ENCODE measurements at regions of chr5 and their contacts with region 1.

Region 1: GRCh38 chr5:64811050-64811640 is 42.4 kb downstream of the CWC27 start:
- DNase-seq: peak; percentile 73
- H3K4me3 Mint-ChIP-seq: no peak overlapping the region
- H3K27ac Mint-ChIP-seq: no peak overlapping the region
- H3K4me1 Mint-ChIP-seq: peaks cover 1% of the 10 kb centered on the region
- H3K27me3 Mint-ChIP-seq: no peaks in the 10 kb centered on the region

Region 2: DNA sequence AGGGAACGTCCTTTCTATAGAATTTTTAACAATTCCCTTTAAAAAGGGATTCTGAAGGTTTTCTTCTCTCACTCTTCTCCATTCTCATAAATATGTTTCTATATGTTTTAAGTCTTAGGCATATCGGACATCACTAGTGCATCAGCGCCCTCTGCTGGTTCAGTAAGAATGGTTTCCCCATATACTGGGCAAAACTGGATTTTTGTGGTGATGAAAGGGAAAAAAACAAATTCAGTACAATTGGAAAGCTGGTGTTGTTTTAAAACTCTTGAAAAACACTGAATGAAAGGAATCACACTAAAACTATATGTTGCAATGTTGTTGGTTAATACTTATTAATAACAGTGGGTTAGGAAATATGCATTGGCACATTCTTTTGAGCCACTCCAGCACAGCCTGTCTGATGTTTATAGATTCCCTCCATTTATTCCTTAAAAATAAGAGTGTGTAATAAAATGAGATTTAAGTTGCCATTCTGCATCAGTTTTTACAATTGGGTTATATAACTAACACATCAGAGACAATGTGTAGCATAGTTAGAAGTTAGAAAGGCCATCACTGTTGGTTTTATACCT is 26.6 kb before region 1 on chr5:
- intact Hi-C with region 1: no loop called
- DNase-seq: peak; percentile 91
- H3K4me3 Mint-ChIP-seq: no peak overlapping the region
- H3K27ac Mint-ChIP-seq: no peak overlapping the region
- H3K4me1 Mint-ChIP-seq: peaks cover 2% of the 10 kb centered on the region
- H3K27me3 Mint-ChIP-seq: no peaks in the 10 kb centered on the region

Region 3: GRCh38 chr5:65102828-65103711 is 291.9 kb after region 1 on chr5:
- intact Hi-C with region 1: loop called (anchors 10 kb)
- DNase-seq: peak; percentile 80
- H3K4me3 Mint-ChIP-seq: peak overlapping the region; percentile 80
- H3K27ac Mint-ChIP-seq: peak overlapping the region; percentile 74
- H3K4me1 Mint-ChIP-seq: peaks cover 30% of the 10 kb centered on the region
- H3K27me3 Mint-ChIP-seq: peaks cover 13% of the 10 kb centered on the region

Region 4: GRCh38 chr5:65394087-65394486 is 582.9 kb after region 1 on chr5:
- intact Hi-C with region 1: loop called (anchors 10 kb)
- DNase-seq: no peak
- H3K4me3 Mint-ChIP-seq: no peak overlapping the region
- H3K27ac Mint-ChIP-seq: no peak overlapping the region
- H3K4me1 Mint-ChIP-seq: no peaks in the 10 kb centered on the region
- H3K27me3 Mint-ChIP-seq: no peaks in the 10 kb centered on the region

Measured in activated CD4-positive, alpha-beta T cell treated with anti-CD3 and anti-CD28 coated beads, Interleukin-2, amount 10 ng/mL, durations not matched to agents 24 days and 14 days (primary cell).